ENCODE measurements at regions of chr14 and their contacts with region 1.

Region 1: DNA sequence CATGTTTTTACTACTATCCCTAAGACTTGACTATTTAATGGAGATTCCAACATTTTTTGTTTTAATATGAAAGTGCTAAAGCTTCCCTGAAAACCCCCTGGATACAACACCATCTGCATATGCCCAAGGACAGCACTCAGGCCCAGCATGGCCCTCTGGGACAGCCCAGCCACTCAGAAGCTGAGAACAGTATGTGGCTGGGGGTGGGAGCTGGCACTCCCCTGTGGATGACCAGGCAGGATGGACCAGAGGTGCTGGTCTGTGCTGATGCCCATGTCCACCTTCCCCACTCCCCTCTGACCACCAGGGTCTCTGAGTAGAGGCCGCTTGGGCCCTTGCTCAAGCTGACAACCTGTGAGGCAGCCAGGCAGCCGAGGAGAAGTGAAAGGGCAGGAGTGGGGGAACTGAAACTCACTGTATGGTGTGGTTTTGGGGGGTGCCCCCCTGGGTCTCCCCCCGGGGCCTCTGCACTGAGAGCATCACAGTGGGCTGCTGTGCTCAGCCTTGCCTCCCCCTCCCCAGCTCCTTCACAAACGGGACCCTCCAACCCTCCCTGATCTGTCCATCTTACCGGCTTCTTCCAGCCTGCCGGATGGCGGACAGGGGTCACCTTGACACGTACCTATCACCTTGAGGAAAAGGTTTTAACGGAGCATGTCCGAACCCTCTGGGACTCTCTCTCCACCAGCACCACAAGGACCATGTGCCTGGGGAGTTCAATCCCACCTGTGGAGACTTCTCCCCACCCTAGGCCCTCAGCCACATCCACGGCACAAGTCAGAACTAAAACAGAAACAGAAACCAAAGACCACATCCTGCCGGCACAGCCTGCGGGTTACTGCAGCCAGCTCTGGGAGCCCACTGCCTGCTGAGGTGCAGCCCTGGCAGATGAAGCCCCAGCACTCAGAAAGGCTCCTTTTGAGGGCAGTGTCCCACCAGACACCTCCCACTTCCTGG is at the start of gene TMEM229B:
- DNase-seq: peak; percentile 45 to 86 (median 81)
- ATAC-seq: peak; percentile 95
- H3K4me3 ChIP-seq: peak within 1 kb of the TSS; percentile 74
- H3K4me3 Mint-ChIP-seq: peak within 1 kb of the TSS; percentile 92 to 99 (median 98)
- H3K27ac ChIP-seq: peak within 1 kb of the TSS; percentile 85
- H3K27ac Mint-ChIP-seq: peak within 1 kb of the TSS; percentile 96 to 100 (median 99)
- H3K4me1 ChIP-seq: peaks cover 25 to 43% of the 10 kb centered on the region in 2 donors
- H3K4me1 Mint-ChIP-seq: peaks cover 46 to 76% (median 68%) of the 10 kb centered on the region in 7 donors
- H3K27me3 ChIP-seq: no peaks in the 10 kb centered on the region
- H3K27me3 Mint-ChIP-seq: peaks cover 0 to 4% (median 0%) of the 10 kb centered on the region in 5 donors
- total RNA-seq, gene TMEM229B: 19.1 to 32.2 (median 30.6) TPM

Region 2: DNA sequence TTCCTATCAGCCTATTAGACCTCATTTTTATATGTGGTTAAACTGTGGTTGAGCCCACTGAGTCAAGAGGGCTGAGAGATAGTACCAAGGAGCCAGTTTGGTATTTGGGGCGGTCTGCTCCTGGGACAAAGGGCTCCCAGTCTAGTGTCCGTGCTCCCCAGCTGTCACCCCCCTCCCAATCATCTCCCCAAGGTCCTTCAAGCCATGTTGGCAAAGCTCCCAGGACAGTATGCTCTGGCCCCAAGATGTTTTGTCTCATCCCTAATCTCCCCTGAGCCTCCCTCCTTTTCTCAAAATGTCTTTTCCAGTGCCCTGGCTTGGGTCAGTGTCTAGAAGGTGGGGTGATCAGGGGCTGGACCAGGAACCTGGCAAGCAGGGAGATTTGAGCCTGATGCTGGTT is 50.3 kb before region 1 on chr14:
- CTCF ChIA-PET with region 1: no interaction called
- POLR2A ChIA-PET with region 1: no interaction called
- intact Hi-C with region 1: no loop called
- DNase-seq: no peak
- ATAC-seq: no peak
- H3K4me3 ChIP-seq: no peak overlapping the region
- H3K4me3 Mint-ChIP-seq: no peak overlapping the region
- H3K27ac ChIP-seq: no peak overlapping the region
- H3K27ac Mint-ChIP-seq: no peak overlapping the region
- H3K4me1 ChIP-seq: no peaks in the 10 kb centered on the region
- H3K4me1 Mint-ChIP-seq: no peaks in the 10 kb centered on the region
- H3K27me3 ChIP-seq: no peaks in the 10 kb centered on the region
- H3K27me3 Mint-ChIP-seq: peaks cover 0 to 42% (median 7%) of the 10 kb centered on the region in 5 donors

Region 3: GRCh38 chr14:67467179-67468080 is 20.8 kb before region 1 on chr14:
- CTCF ChIA-PET with region 1: interaction called, 3 read pairs
- POLR2A ChIA-PET with region 1: interaction called, 10 read pairs
- intact Hi-C with region 1: loop called in 1 of 2 experiments (anchors 1 kb)
- DNase-seq: peak in 3 of 9 donors; percentile 9 to 18 (median 13)
- ATAC-seq: no peak
- H3K4me3 ChIP-seq: no peak overlapping the region
- H3K4me3 Mint-ChIP-seq: peak overlapping the region in 4 of 10 donors; percentile 16 to 38 (median 22)
- H3K27ac ChIP-seq: no peak overlapping the region
- H3K27ac Mint-ChIP-seq: peak overlapping the region in 7 of 9 donors; percentile 2 to 72 (median 54)
- H3K4me1 ChIP-seq: peaks cover 9 to 21% of the 10 kb centered on the region in 2 donors
- H3K4me1 Mint-ChIP-seq: peaks cover 8 to 52% (median 40%) of the 10 kb centered on the region in 7 donors
- H3K27me3 ChIP-seq: no peaks in the 10 kb centered on the region
- H3K27me3 Mint-ChIP-seq: peaks cover 0 to 13% (median 0%) of the 10 kb centered on the region in 5 donors

Region 4: DNA sequence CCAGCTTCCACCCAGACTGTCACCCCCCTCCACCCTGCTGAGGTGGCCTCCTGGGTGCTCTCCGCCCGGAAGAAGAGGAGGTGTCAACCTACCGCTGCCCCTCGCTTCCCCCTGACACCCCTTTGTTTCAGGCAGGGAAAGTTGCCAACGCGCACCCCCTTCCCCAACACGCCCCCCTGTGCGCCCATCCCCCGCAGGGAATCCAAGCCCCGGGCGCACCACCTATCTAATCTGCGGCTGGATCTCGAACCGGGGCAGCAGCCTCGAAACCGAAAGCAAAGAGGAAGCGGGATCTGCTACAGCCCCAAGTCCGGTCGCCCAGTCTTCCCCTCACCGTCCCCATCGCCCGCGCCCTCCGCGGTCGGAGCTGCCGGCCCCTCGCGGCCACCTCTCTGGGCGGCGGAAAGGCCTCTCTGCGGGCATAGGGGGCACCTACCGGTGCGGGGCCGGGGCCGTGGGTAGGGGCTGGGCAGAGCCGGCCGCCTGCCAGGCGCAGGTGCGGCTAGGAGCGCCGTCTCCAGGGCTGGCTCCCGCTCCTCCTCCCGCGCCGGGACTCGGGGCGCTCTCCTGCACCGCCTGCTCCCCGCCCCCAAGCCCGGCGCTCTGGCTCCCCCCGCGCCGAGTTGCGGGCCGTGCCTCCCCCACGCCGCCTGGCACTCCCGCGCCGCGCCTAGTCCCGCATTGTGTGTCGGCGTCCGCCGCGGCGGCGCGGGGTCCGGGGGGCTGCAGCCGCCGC is 26.6 kb after region 1 on chr14:
- CTCF ChIA-PET with region 1: interaction called, 3 read pairs
- POLR2A ChIA-PET with region 1: interaction called, 23 read pairs
- intact Hi-C with region 1: loop called (anchors 1 kb)
- DNase-seq: peak; percentile 33 to 56 (median 47)
- ATAC-seq: peak; percentile 76
- H3K4me3 ChIP-seq: peak overlapping the region; percentile 68
- H3K4me3 Mint-ChIP-seq: peak overlapping the region; percentile 84 to 95 (median 92)
- H3K27ac ChIP-seq: peak overlapping the region; percentile 73
- H3K27ac Mint-ChIP-seq: peak overlapping the region; percentile 56 to 93 (median 89)
- H3K4me1 ChIP-seq: peaks cover 14 to 21% of the 10 kb centered on the region in 2 donors
- H3K4me1 Mint-ChIP-seq: peaks cover 15 to 35% (median 22%) of the 10 kb centered on the region in 7 donors
- H3K27me3 ChIP-seq: no peaks in the 10 kb centered on the region
- H3K27me3 Mint-ChIP-seq: peaks cover 0 to 82% (median 0%) of the 10 kb centered on the region in 5 donors

Region 5: GRCh38 chr14:67532998-67533753 is 45.0 kb after region 1 on chr14 and contains the start of gene PLEKHH1:
- CTCF ChIA-PET with region 1: interaction called, 3 read pairs
- POLR2A ChIA-PET with region 1: no interaction called
- intact Hi-C with region 1: loop called (anchors 1 to 5 kb)
- DNase-seq: peak in 8 of 9 donors; percentile 15 to 72 (median 29)
- ATAC-seq: peak; percentile 76
- H3K4me3 ChIP-seq: peak within 1 kb of the TSS; percentile 39
- H3K4me3 Mint-ChIP-seq: peak within 1 kb of the TSS; percentile 59 to 87 (median 74)
- H3K27ac ChIP-seq: no peak within 1 kb of the TSS
- H3K27ac Mint-ChIP-seq: peak within 1 kb of the TSS in 1 of 9 donors; percentile 15
- H3K4me1 ChIP-seq: no peaks in the 10 kb centered on the region
- H3K4me1 Mint-ChIP-seq: peaks cover 0 to 8% (median 4%) of the 10 kb centered on the region in 7 donors
- H3K27me3 ChIP-seq: no peaks in the 10 kb centered on the region
- H3K27me3 Mint-ChIP-seq: peaks cover 14 to 65% (median 22%) of the 10 kb centered on the region in 5 donors
- total RNA-seq, gene PLEKHH1: 0.22 to 1.4 (median 0.32) TPM

Region 6: GRCh38 chr14:67987606-67988005 is 499.4 kb after region 1 on chr14:
- CTCF ChIA-PET with region 1: no interaction called
- POLR2A ChIA-PET with region 1: no interaction called
- intact Hi-C with region 1: no loop called
- DNase-seq: no peak
- ATAC-seq: no peak
- H3K4me3 ChIP-seq: no peak overlapping the region
- H3K4me3 Mint-ChIP-seq: no peak overlapping the region
- H3K27ac ChIP-seq: no peak overlapping the region
- H3K27ac Mint-ChIP-seq: no peak overlapping the region
- H3K4me1 ChIP-seq: no peaks in the 10 kb centered on the region
- H3K4me1 Mint-ChIP-seq: peaks cover 0 to 3% (median 0%) of the 10 kb centered on the region in 7 donors
- H3K27me3 ChIP-seq: no peaks in the 10 kb centered on the region
- H3K27me3 Mint-ChIP-seq: no peaks in the 10 kb centered on the region

Measured in naive thymus-derived CD4-positive, alpha-beta T cell (primary cell).